Lower lobe of right lung (tissue), 2 donors: ENCODE measurements at regions of chr16 and their contacts with region 1.

Region 1: DNA sequence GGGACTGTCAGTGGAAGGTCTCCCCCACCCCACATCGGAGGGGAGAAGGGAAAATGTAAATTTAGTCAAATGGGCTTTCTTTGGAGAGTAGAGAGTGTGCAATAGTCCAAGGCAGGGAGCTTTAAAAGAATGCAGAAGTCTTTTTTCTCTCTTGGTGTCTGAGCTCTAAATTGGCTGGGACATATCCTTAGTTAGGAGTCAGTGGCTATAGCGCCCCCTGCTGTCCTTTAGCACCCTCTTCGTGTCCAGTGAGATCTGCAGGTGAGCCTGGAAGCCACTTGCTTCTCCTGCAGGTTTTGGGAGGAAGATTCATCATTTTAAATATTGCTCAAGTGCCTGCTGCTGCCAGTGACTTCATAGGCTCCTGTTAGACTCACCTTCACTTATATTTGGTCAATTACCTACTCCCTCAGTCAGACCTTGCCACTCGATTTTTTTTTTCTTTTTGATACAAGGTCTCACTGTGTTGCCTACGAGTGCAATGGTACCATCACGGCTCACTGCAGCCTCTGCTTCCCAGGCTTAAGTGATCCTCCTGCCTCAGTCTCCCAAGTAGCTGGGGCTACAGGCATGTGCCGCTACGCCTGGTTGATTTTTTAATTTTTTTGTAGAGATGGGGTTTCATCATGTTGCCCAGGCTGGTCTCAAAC is 174.8 kb downstream of the PRKCB start:
- DNase-seq: peak; percentile 84
- ATAC-seq: peak; percentile 70 to 81
- H3K4me3 ChIP-seq: no peak overlapping the region
- H3K27ac ChIP-seq: no peak overlapping the region
- H3K4me1 ChIP-seq: peaks cover 11% of the 10 kb centered on the region
- H3K27me3 ChIP-seq: no peaks in the 10 kb centered on the region
- CTCF ChIP-seq: peak; percentile 79

Region 2: GRCh38 chr16:23803591-23804123 is 206.9 kb before region 1 on chr16:
- intact Hi-C with region 1: loop called (anchors 10 kb)
- DNase-seq: peak; percentile 70
- ATAC-seq: peak; percentile 69 to 78
- H3K4me3 ChIP-seq: peak overlapping the region; percentile 27
- H3K27ac ChIP-seq: no peak overlapping the region
- H3K4me1 ChIP-seq: peaks cover 9% of the 10 kb centered on the region
- H3K27me3 ChIP-seq: no peaks in the 10 kb centered on the region
- CTCF ChIP-seq: peak; percentile 60

Region 3: DNA sequence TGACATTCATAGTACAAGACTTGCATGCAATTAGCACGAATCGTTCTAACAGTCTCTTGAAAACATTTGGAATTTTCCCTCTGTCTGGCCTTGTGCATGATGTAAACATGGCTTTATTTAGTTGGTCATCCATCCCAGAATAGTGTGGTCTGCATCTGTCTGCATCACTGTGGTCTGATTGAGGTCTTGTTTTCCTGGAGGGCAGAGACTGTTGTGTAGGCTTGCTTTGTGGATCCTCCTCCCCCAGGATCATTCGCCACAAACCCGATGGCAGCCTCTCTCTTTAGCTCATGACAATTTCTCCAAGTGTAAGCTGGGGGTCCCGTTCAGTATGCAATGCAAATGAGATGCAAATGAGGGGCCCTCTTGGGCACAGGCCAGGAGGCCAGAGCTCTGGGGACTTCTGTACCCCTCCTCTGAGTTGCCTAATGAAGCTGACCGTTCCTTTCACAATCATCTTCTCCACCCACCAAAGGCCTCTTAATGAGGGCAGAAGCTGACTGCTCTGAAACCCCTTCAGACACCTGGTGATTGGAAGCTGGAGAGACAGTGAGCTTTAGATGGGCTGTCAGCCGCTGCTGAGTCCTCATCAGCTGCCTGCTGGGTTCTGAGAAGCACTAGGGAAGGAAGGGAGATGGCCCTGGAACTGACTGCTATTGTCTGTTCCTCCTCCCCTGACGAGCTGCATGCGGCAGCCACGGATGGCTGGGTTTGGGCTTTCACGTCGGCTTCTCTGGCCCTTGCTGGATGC is 44.4 kb after region 1 on chr16:
- intact Hi-C with region 1: no loop called
- DNase-seq: no peak
- ATAC-seq: no peak
- H3K4me3 ChIP-seq: no peak overlapping the region
- H3K27ac ChIP-seq: no peak overlapping the region
- H3K4me1 ChIP-seq: no peaks in the 10 kb centered on the region
- H3K27me3 ChIP-seq: peaks cover 3% of the 10 kb centered on the region
- CTCF ChIP-seq: no peak

Region 4: DNA sequence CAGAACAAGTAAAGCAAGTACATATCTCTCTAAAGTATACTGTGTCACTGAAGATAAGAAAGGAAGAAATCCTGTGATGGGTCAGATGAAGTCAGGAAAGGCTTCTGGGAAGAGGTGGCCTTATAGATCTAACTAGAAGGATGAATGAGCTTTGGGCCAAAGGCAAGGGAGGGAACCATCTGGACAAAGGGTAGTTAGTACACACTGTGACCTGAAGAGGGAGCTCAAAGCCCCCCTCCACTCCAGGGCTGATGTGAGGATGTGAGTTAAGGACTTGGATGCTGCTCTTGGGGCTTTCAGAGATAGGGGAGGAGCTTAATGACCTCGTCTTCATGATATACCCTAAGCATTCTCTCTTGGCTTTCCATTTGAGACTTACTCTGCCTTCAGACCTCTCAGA is 60.3 kb after region 1 on chr16:
- intact Hi-C with region 1: no loop called
- DNase-seq: no peak
- ATAC-seq: peak; percentile 57 to 73
- H3K4me3 ChIP-seq: no peak overlapping the region
- H3K27ac ChIP-seq: no peak overlapping the region
- H3K4me1 ChIP-seq: no peaks in the 10 kb centered on the region
- H3K27me3 ChIP-seq: no peaks in the 10 kb centered on the region
- CTCF ChIP-seq: peak; percentile 37